ENCODE measurements at regions of chr12 and their contacts with region 1.

Region 1: DNA sequence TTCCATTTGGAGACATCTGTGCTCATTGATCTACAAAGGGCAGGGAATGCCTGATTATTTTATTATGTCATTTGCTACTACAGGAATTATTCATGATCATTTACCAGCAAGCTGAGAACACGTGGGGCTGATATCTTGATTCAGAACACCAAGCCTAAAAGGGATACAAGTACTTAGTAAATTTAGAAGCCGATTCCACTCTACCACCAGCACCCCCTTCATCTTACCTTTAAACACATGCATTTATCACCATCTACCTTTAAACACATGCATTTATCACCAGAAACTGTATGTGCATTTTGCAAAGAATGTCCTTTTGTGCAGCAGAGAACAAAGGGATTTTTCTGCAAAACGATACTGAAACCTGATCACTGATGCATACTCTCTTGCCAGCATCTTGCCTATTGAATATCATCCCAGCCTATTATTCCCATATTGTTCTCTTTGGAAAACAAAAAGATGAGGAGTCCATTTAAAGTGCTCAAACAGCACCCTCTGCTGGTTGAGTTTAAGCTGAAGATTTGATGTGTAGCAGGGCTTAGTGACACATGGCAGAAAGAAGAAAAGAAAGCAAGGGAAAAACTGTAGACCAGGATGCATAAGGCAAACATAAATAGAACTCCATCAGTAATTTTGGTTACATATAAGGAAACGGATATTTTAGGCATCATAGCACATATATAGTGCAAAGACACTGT is 132.6 kb upstream of the PLEKHG7 start:
- DNase-seq: peak; percentile 58
- ATAC-seq: peak; percentile 92
- H3K4me3 Mint-ChIP-seq: no peak overlapping the region
- H3K27ac Mint-ChIP-seq: no peak overlapping the region
- H3K4me1 Mint-ChIP-seq: peaks cover 32% of the 10 kb centered on the region
- H3K27me3 Mint-ChIP-seq: no peaks in the 10 kb centered on the region

Region 2: GRCh38 chr12:91382081-91382543 is 1188.1 kb before region 1 on chr12:
- CTCF ChIA-PET with region 1: interaction called, 3 read pairs
- POLR2A ChIA-PET with region 1: no interaction called
- intact Hi-C with region 1: loop called (anchors 1 kb)
- DNase-seq: peak; percentile 90
- ATAC-seq: peak; percentile 81
- H3K4me3 Mint-ChIP-seq: peak overlapping the region; percentile 70
- H3K27ac Mint-ChIP-seq: no peak overlapping the region
- H3K4me1 Mint-ChIP-seq: peaks cover 7% of the 10 kb centered on the region
- H3K27me3 Mint-ChIP-seq: peaks cover 3% of the 10 kb centered on the region

Region 3: DNA sequence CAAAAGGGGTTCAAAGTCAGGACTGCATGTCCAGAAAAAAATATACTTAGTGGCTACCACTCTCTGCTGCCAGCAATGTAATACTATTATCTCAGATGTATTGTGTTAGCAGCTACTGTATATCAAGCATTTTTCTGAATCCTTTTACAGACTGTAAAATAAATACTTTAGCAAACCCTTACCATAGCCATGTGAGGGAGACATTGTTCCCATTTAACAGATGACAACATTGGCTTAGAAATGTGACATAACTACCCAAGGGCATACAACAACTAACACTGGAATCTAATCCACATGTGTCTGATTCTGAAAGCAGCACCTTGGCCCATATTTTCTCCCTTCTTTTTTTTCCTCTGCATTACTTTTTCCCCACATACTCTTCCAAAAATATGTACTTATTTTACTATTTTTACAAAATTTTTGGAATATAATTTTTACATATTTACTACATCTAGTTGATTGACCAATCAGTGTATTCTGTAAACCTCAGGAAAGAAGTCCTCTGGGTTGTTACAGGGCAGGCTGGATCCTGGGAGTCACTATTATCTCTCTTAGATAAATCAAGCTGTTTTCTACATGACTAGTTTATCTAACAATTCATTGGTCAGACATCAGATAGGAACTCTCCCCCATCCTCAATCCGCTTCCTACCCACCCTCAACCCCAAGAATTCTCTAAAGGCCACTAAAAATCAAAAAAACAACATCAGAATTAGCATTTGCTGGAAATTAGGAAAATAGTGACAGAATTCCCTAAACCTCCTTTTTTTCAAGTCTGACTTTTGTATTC is 578.6 kb before region 1 on chr12:
- CTCF ChIA-PET with region 1: no interaction called
- POLR2A ChIA-PET with region 1: no interaction called
- intact Hi-C with region 1: loop called (anchors 1 to 10 kb)
- DNase-seq: no peak
- ATAC-seq: peak; percentile 66
- H3K4me3 Mint-ChIP-seq: no peak overlapping the region
- H3K27ac Mint-ChIP-seq: no peak overlapping the region
- H3K4me1 Mint-ChIP-seq: peaks cover 54% of the 10 kb centered on the region
- H3K27me3 Mint-ChIP-seq: no peaks in the 10 kb centered on the region

Region 4: GRCh38 chr12:92297932-92298696 is 272.1 kb before region 1 on chr12:
- CTCF ChIA-PET with region 1: no interaction called
- POLR2A ChIA-PET with region 1: no interaction called
- intact Hi-C with region 1: loop called in 1 of 2 experiments (anchors 5 kb)
- DNase-seq: peak; percentile 10
- ATAC-seq: peak; percentile 88
- H3K4me3 Mint-ChIP-seq: no peak overlapping the region
- H3K27ac Mint-ChIP-seq: peak overlapping the region; percentile 85
- H3K4me1 Mint-ChIP-seq: peaks cover 27% of the 10 kb centered on the region
- H3K27me3 Mint-ChIP-seq: no peaks in the 10 kb centered on the region

Region 5: GRCh38 chr12:92408072-92408900 is 161.9 kb before region 1 on chr12:
- CTCF ChIA-PET with region 1: interaction called, 4 read pairs
- POLR2A ChIA-PET with region 1: no interaction called
- intact Hi-C with region 1: loop called in 1 of 2 experiments (anchors 2 kb)
- DNase-seq: peak; percentile 75
- ATAC-seq: peak; percentile 35
- H3K4me3 Mint-ChIP-seq: no peak overlapping the region
- H3K27ac Mint-ChIP-seq: peak overlapping the region; percentile 60
- H3K4me1 Mint-ChIP-seq: peaks cover 53% of the 10 kb centered on the region
- H3K27me3 Mint-ChIP-seq: no peaks in the 10 kb centered on the region

Region 6: GRCh38 chr12:92539113-92539749 is 31.0 kb before region 1 on chr12:
- CTCF ChIA-PET with region 1: no interaction called
- POLR2A ChIA-PET with region 1: no interaction called
- intact Hi-C with region 1: loop called in 1 of 2 experiments (anchors 1 kb)
- DNase-seq: peak; percentile 43
- ATAC-seq: peak; percentile 77
- H3K4me3 Mint-ChIP-seq: no peak overlapping the region
- H3K27ac Mint-ChIP-seq: peak overlapping the region; percentile 92
- H3K4me1 Mint-ChIP-seq: peaks cover 60% of the 10 kb centered on the region
- H3K27me3 Mint-ChIP-seq: no peaks in the 10 kb centered on the region

Region 7: DNA sequence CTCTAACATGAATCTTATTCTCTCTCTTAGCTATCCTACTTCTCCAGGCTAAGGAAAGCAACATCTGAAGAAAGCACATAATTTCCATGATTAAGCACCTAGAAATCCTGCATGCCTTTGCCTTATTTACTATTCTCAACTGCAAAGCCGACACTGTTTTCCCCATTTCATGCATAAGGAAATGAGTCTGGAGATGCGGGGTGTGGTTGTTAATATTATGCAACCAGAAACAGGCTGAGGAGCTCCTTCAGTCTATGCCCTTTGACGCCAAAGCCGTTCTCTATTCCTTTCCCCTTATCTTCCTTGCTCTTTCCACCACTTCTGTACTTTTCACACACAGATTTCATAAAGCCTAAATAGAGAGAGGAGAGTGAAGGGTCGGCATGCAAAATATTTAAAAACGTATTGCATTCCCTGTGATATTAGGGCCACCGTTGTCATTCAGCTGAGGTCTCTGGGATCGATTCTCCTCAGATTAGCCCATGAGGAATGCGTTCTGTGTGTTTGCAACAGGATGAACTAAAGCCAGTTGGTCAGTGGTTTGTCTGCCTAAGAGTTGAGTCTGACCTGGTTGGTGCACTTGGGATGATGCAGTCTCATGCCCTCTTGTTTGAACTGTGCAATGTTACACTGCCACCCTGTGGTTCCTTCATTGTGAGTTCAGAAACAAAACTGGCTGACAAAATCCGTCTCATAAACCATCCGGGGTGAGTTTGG is 79.5 kb after region 1 on chr12:
- CTCF ChIA-PET with region 1: interaction called, 4 read pairs
- POLR2A ChIA-PET with region 1: no interaction called
- intact Hi-C with region 1: loop called (anchors 1 kb)
- DNase-seq: peak; percentile 71
- ATAC-seq: peak; percentile 90
- H3K4me3 Mint-ChIP-seq: no peak overlapping the region
- H3K27ac Mint-ChIP-seq: no peak overlapping the region
- H3K4me1 Mint-ChIP-seq: peaks cover 10% of the 10 kb centered on the region
- H3K27me3 Mint-ChIP-seq: no peaks in the 10 kb centered on the region

Measured in activated CD4-positive, alpha-beta T cell treated with anti-CD3 and anti-CD28 coated beads for 36 hours (primary cell).